Motor neuron (in vitro differentiated cells): ENCODE measurements at regions of chr22 and their contacts with region 1.

Region 1: GRCh38 chr22:17672417-17672991 is 33.9 kb downstream of the BCL2L13 start:
- ATAC-seq: peak; percentile 53 to 84 (median 63)
- H3K4me3 ChIP-seq: no peak overlapping the region
- H3K27ac ChIP-seq: peak overlapping the region; percentile 54 to 65
- H3K4me1 ChIP-seq: peaks cover 14 to 21% of the 10 kb centered on the region in 2 donors

Region 2: GRCh38 chr22:17570851-17571641 is 101.5 kb before region 1 on chr22:
- in situ Hi-C with region 1: loop called in 2 of 9 experiments (anchors 25 kb)
- ATAC-seq: peak in 5 of 8 experiments; percentile 15 to 94 (median 80)
- H3K4me3 ChIP-seq: no peak overlapping the region
- H3K27ac ChIP-seq: no peak overlapping the region
- H3K4me1 ChIP-seq: peaks cover 0 to 29% of the 10 kb centered on the region in 2 donors